Mammary epithelial cell (primary cell): ENCODE measurements at regions of chr19 and their contacts with region 1.

Region 1: GRCh38 chr19:54281007-54281728 is at the start of gene LILRB2:
- DNase-seq: no peak
- H3K4me3 ChIP-seq: no peak within 1 kb of the TSS
- H3K27ac ChIP-seq: no peak within 1 kb of the TSS
- H3K4me1 ChIP-seq: no peaks in the 10 kb centered on the region
- H3K27me3 ChIP-seq: no peaks in the 10 kb centered on the region
- CTCF ChIP-seq: no peak
- total RNA-seq, gene LILRB2: not detected

Region 2: DNA sequence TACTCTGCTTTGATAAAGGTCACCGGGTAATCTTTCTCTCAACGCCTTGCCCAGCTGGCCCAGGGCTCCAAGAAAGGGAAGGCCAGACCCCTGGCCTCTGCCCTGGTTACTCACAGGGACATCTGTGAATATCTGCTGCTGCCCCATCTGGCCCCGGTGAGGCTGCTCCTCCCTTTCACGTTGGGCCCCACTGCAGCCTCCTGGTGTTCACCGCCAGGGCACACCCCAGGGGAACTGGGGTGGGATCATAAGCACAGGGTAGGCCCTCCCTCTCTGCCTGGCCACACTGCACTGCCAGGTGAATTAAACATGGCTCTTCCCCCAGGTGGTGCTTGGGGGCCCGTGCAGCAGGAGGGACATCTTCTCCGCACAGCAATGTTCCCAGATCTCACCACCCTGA is 70.9 kb after region 1 on chr19:
- CTCF ChIA-PET with region 1: no interaction called
- dilution Hi-C with region 1: loop called (anchors 5 kb)
- in situ Hi-C with region 1: no loop called
- intact Hi-C with region 1: no loop called
- DNase-seq: no peak
- H3K4me3 ChIP-seq: no peak overlapping the region
- H3K27ac ChIP-seq: no peak overlapping the region
- H3K4me1 ChIP-seq: no peaks in the 10 kb centered on the region
- H3K27me3 ChIP-seq: no peaks in the 10 kb centered on the region
- CTCF ChIP-seq: no peak

Region 3: GRCh38 chr19:54696117-54696548 is 415.0 kb after region 1 on chr19:
- CTCF ChIA-PET with region 1: no interaction called
- dilution Hi-C with region 1: no loop called
- in situ Hi-C with region 1: no loop called
- intact Hi-C with region 1: no loop called
- DNase-seq: no peak
- H3K4me3 ChIP-seq: no peak overlapping the region
- H3K27ac ChIP-seq: no peak overlapping the region
- H3K4me1 ChIP-seq: no peaks in the 10 kb centered on the region
- H3K27me3 ChIP-seq: no peaks in the 10 kb centered on the region
- CTCF ChIP-seq: no peak